ENCODE measurements at regions of chr3 and their contacts with region 1.

Region 1: DNA sequence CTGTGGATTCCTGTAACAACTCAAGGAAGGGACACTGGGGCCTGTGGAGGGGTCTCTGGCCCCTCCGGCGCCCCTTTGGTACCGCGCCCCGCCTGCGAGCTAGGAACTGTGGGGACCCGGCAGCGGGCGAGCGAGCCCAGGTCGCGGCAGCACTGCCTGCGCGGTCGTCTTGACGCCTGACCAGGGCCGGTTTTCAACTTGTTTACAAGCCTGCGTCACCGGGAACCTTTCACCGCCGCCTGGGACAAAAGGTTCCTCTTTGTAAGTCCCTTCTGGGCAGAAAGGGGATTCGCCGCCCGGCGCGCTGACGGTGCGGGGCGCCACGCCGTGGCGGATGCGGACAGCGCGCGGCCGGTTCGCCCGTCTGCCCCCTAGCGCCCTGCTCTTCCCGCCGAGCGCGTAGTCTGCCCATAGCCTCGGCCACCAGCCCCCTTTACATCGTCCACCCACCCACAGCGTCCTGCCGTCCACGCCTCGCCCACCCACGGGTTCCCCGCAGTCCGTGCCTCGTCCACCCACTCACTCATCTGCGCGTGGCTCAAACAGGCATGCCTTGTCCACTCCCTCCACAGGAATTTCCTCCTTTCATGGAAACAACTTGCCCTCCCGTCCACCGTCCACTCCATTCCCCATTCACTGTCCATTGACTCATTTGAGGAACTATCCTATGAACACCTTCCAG is 5.5 kb upstream of the CFAP100 start:
- DNase-seq: peak; percentile 92
- H3K4me3 ChIP-seq: peak overlapping the region; percentile 16 to 20
- H3K27ac ChIP-seq: peak overlapping the region; percentile 36 to 65
- H3K4me1 ChIP-seq: no peaks in the 10 kb centered on the region
- H3K27me3 ChIP-seq: no peaks in the 10 kb centered on the region
- CTCF ChIP-seq: peak; percentile 92 to 99 (median 98)
- POLR2A ChIP-seq: peak; percentile 56

Region 2: GRCh38 chr3:126134219-126134975 is 254.9 kb before region 1 on chr3:
- intact Hi-C with region 1: loop called (anchors 5 kb)
- DNase-seq: peak; percentile 49
- H3K4me3 ChIP-seq: no peak overlapping the region
- H3K27ac ChIP-seq: no peak overlapping the region
- H3K4me1 ChIP-seq: no peaks in the 10 kb centered on the region
- H3K27me3 ChIP-seq: no peaks in the 10 kb centered on the region
- CTCF ChIP-seq: peak; percentile 57 to 90 (median 81)
- POLR2A ChIP-seq: no peak

Region 3: DNA sequence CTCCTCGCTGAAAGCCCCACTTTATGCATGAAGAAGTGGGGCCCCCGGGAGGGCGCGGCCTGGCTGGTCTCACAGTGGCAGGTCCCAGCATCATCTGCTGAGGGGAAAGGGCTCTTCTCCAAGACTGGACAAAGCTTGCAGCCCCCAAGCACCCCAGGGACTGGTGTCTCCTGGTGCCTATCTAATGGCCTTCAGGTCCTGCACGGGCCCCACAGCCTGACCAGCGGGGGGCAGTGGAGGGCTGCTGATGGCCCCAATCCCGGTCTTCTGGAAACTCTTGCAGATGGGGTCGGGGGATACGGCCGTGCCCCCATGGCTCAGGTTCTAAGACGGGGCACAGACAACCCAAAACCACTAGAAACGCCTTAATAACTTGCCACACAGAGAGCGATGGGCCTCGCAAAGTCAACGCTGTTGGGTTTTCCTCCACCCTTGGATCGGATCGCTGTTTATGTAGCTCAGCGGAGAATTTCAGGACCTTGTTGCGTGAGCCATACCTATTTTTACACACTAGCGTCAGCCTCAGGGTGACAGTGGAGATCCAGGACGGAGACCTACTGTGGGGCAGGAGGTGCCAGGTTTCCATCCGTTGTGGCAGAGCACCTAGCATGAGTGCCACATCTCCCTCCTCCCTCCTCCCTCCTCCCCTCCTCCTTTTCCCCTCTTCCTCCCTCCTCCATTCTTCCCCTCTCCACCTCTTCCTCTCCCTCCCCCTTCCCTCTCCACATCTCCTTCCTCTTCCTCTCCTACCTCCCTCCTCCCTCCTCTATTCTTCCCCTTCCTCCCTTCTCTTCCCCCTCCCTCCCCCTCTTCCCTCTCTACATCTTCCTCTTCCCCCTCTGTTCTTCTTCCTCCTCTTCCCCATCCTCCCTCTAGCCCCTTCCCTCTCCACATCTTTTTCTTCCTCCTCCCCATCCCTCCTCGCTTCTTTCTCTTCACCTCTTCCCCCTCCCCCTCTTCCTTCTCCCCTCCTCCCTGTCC is 129.6 kb before region 1 on chr3:
- intact Hi-C with region 1: loop called (anchors 1 kb)
- DNase-seq: no peak
- H3K4me3 ChIP-seq: no peak overlapping the region
- H3K27ac ChIP-seq: no peak overlapping the region
- H3K4me1 ChIP-seq: no peaks in the 10 kb centered on the region
- H3K27me3 ChIP-seq: no peaks in the 10 kb centered on the region
- CTCF ChIP-seq: peak; percentile 13 to 77 (median 63)
- POLR2A ChIP-seq: no peak

Region 4: DNA sequence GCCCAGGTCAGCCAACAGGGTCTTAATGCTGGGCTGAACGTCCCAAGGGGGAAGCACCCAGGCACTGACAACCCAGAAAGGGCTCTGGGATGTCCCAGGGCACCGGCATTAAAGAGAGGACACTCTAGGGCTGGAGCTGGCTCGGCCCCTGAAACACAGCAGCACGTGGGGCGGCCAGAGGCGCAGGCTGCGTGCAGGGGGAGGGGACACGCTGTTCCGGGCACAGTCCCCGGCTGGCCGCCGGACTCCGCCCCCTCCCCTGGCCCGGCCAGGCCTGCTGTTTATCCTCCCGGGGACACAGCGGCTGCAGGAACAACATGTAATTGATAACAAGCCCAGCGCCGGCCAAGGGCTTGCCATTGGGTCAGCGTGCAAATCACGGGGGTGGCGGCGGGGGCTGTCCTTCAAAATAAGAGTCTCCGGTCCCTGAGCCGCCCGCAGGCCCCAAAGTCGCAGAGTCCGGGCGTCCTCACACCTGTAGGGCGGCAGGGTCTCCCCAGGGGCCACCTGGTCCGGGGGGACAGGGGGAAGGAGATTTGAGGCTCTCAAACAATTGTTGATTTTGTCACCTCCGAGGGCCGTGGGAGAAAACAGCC is 33.4 kb before region 1 on chr3:
- intact Hi-C with region 1: loop called (anchors 1 kb)
- DNase-seq: peak; percentile 98
- H3K4me3 ChIP-seq: peak overlapping the region; percentile 96 to 98
- H3K27ac ChIP-seq: peak overlapping the region; percentile 97 to 98
- H3K4me1 ChIP-seq: peaks cover 10% of the 10 kb centered on the region
- H3K27me3 ChIP-seq: no peaks in the 10 kb centered on the region
- CTCF ChIP-seq: peak in 1 of 4 experiments; percentile 15
- POLR2A ChIP-seq: peak; percentile 48

Region 5: GRCh38 chr3:126431103-126431534 is 41.9 kb after region 1 on chr3:
- intact Hi-C with region 1: no loop called
- DNase-seq: no peak
- H3K4me3 ChIP-seq: no peak overlapping the region
- H3K27ac ChIP-seq: no peak overlapping the region
- H3K4me1 ChIP-seq: no peaks in the 10 kb centered on the region
- H3K27me3 ChIP-seq: no peaks in the 10 kb centered on the region
- CTCF ChIP-seq: no peak
- POLR2A ChIP-seq: no peak

Measured in prostate gland (tissue), 2 donors.